GM12878 (cell line): ENCODE measurements at regions of chr12 and their contacts with region 1.

Region 1: GRCh38 chr12:45543906-45544315 is 185.6 kb upstream of the ARID2 start:
- DNase-seq: peak; percentile 56
- ATAC-seq: peak; percentile 99
- H3K4me3 ChIP-seq: no peak overlapping the region
- H3K27ac ChIP-seq: no peak overlapping the region
- H3K4me1 ChIP-seq: no peaks in the 10 kb centered on the region
- H3K27me3 ChIP-seq: no peaks in the 10 kb centered on the region
- CTCF ChIP-seq: peak; percentile 73 to 84 (median 83)
- EP300 ChIP-seq: no peak
- POLR2A ChIP-seq: no peak
- RAD21 ChIP-seq: peak; percentile 96

Region 2: DNA sequence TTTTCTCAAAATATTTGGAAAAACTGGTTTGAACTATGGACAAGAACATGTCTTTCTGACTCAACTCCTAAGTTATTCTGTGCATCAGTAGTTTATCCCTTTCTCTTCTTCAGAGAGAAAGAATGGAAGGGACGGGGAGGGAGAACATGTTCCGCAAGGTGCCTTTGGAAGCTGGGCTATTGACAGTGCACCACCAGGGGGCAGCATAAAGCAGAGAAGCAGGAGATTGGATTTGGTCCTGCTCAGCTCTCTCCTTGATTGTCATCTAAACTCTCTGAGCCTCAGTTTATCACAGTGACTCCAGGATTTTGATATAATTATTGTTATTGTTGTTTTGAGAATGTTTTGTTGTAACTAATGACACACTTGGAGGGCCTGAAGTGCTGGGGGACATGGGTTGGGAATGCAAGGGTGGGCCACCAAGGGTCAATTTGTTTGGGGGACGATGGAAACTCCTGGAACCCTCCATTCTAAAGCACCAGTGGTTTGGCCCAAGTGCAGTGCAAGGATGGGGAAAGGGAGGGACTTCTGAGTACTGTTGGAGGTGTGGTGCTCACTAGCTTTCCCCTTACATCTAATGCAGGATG is 373.4 kb before region 1 on chr12:
- CTCF ChIA-PET with region 1: interaction called, 19 read pairs
- POLR2A ChIA-PET with region 1: no interaction called
- RAD21 ChIA-PET with region 1: interaction called, 10 read pairs
- SMC1A ChIA-PET with region 1: interaction called, 7 read pairs
- in situ Hi-C with region 1: no loop called
- intact Hi-C with region 1: loop called (anchors 5 kb)
- DNase-seq: peak; percentile 26
- ATAC-seq: peak; percentile 95
- H3K4me3 ChIP-seq: no peak overlapping the region
- H3K27ac ChIP-seq: no peak overlapping the region
- H3K4me1 ChIP-seq: no peaks in the 10 kb centered on the region
- H3K27me3 ChIP-seq: no peaks in the 10 kb centered on the region
- CTCF ChIP-seq: peak; percentile 89 to 92 (median 90)
- EP300 ChIP-seq: no peak
- POLR2A ChIP-seq: no peak
- RAD21 ChIP-seq: peak; percentile 90

Region 3: DNA sequence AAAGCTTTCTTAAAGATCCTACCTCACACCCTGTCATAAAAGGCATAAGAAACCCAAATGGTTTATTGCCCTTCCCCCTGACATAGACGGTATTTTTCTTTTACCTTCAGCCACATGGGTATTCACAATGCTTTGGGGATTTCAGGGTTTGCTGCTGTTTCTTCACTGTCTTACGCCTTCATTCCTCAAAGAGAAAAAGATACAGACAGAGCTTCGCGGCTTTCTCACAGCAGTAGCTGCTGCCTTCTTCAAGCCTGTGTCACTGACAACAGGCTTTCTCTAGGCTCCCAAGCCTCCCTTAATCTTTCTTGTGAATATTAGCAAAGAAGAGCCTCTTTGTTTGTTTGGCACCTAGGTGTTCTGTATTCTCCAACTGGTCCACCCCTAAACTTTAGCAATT is 11.8 kb before region 1 on chr12:
- CTCF ChIA-PET with region 1: interaction called, 22 read pairs
- POLR2A ChIA-PET with region 1: no interaction called
- RAD21 ChIA-PET with region 1: interaction called, 3 read pairs
- SMC1A ChIA-PET with region 1: interaction called, 8 read pairs
- in situ Hi-C with region 1: no loop called
- intact Hi-C with region 1: no loop called
- DNase-seq: no peak
- ATAC-seq: no peak
- H3K4me3 ChIP-seq: no peak overlapping the region
- H3K27ac ChIP-seq: no peak overlapping the region
- H3K4me1 ChIP-seq: no peaks in the 10 kb centered on the region
- H3K27me3 ChIP-seq: no peaks in the 10 kb centered on the region
- CTCF ChIP-seq: no peak
- EP300 ChIP-seq: no peak
- POLR2A ChIP-seq: no peak
- RAD21 ChIP-seq: no peak

Region 4: GRCh38 chr12:45720069-45720468 is 176.2 kb after region 1 on chr12:
- CTCF ChIA-PET with region 1: interaction called, 109 read pairs
- POLR2A ChIA-PET with region 1: no interaction called
- RAD21 ChIA-PET with region 1: interaction called, 79 read pairs
- SMC1A ChIA-PET with region 1: interaction called, 67 read pairs
- in situ Hi-C with region 1: no loop called
- intact Hi-C with region 1: no loop called
- DNase-seq: no peak
- ATAC-seq: no peak
- H3K4me3 ChIP-seq: no peak overlapping the region
- H3K27ac ChIP-seq: no peak overlapping the region
- H3K4me1 ChIP-seq: no peaks in the 10 kb centered on the region
- H3K27me3 ChIP-seq: no peaks in the 10 kb centered on the region
- CTCF ChIP-seq: no peak
- EP300 ChIP-seq: no peak
- POLR2A ChIP-seq: no peak
- RAD21 ChIP-seq: no peak

Region 5: GRCh38 chr12:45745861-45746277 is 202.0 kb after region 1 on chr12:
- CTCF ChIA-PET with region 1: interaction called, 53 read pairs
- POLR2A ChIA-PET with region 1: no interaction called
- RAD21 ChIA-PET with region 1: interaction called, 17 read pairs
- SMC1A ChIA-PET with region 1: interaction called, 28 read pairs
- in situ Hi-C with region 1: no loop called
- intact Hi-C with region 1: loop called (anchors 5 kb)
- DNase-seq: no peak
- ATAC-seq: peak; percentile 76
- H3K4me3 ChIP-seq: no peak overlapping the region
- H3K27ac ChIP-seq: no peak overlapping the region
- H3K4me1 ChIP-seq: no peaks in the 10 kb centered on the region
- H3K27me3 ChIP-seq: no peaks in the 10 kb centered on the region
- CTCF ChIP-seq: peak in 2 of 3 experiments; percentile 30 to 38; a peak in 3 of 6 replicates
- EP300 ChIP-seq: no peak
- POLR2A ChIP-seq: no peak
- RAD21 ChIP-seq: no peak